ENCODE measurements at regions of chr3 and their contacts with region 1.

Region 1: GRCh38 chr3:136932978-136933772 is 24.6 kb upstream of the IL20RB start:
- DNase-seq: no peak
- ATAC-seq: no peak
- H3K4me3 ChIP-seq: no peak overlapping the region
- H3K27ac ChIP-seq: no peak overlapping the region
- H3K4me1 ChIP-seq: 0 out of 2 replicates have a peak, but pooled peaks cover 2% of the 10 kb centered on the region
- H3K27me3 ChIP-seq: no peaks in the 10 kb centered on the region
- CTCF ChIP-seq: no peak
- POLR2A ChIP-seq: no peak
- RAD21 ChIP-seq: no peak

Region 2: DNA sequence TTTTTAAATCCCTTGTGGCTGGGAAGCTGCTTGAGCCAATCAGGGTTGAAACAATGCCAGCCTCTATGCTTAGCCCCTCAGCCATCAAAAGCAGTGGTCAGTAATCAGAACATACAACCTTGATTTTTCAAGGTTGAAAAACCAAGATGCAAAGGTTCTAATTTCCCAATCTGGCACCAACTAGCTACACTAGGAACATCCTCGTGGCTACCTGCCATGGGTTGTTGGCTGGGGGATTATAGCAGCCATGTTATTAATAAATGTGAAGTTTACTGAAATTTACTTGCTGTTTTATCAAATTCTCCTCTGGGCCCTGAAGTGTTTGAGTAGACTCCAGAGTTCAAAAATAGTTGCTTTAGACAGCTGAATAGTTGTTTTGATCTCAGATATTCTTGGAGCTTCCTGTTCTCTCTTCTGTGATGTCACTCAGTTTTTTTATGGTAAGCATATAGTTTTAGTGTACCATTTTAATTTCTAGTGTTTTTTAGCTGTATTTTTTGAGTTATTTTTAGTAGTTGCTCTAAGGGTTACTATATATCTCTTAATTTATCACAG is 651.1 kb before region 1 on chr3:
- CTCF ChIA-PET with region 1: no interaction called
- POLR2A ChIA-PET with region 1: no interaction called
- dilution Hi-C with region 1: no loop called
- in situ Hi-C with region 1: no loop called
- intact Hi-C with region 1: no loop called
- DNase-seq: no peak
- ATAC-seq: no peak
- H3K4me3 ChIP-seq: no peak overlapping the region
- H3K27ac ChIP-seq: no peak overlapping the region
- H3K4me1 ChIP-seq: peaks cover 9% of the 10 kb centered on the region
- H3K27me3 ChIP-seq: no peaks in the 10 kb centered on the region
- CTCF ChIP-seq: no peak
- POLR2A ChIP-seq: no peak
- RAD21 ChIP-seq: no peak

Region 3: DNA sequence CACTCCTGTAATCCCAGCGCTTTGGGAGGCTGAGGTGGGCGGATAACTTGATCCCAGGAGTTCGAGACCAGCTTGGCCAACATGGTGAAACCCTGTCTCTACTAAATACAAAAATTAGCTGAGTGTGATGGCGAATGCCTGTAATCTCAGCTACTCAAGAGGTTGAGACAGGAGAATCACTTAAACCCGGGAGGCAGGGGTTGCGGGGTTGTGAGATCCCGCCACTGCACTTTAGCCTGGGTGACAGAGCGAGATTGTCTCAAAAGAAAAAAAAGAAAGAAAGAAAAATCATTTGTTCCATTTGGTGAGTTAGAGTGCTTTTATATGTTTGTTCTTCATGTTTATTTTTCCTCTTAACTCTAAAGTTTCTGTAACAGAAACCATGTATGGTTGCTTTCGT is 63.9 kb before region 1 on chr3:
- CTCF ChIA-PET with region 1: interaction called, 11 read pairs
- POLR2A ChIA-PET with region 1: no interaction called
- dilution Hi-C with region 1: no loop called
- in situ Hi-C with region 1: no loop called
- intact Hi-C with region 1: no loop called
- DNase-seq: no peak
- ATAC-seq: no peak
- H3K4me3 ChIP-seq: no peak overlapping the region
- H3K27ac ChIP-seq: no peak overlapping the region
- H3K4me1 ChIP-seq: no peaks in the 10 kb centered on the region
- H3K27me3 ChIP-seq: no peaks in the 10 kb centered on the region
- CTCF ChIP-seq: no peak
- POLR2A ChIP-seq: no peak
- RAD21 ChIP-seq: no peak

Region 4: DNA sequence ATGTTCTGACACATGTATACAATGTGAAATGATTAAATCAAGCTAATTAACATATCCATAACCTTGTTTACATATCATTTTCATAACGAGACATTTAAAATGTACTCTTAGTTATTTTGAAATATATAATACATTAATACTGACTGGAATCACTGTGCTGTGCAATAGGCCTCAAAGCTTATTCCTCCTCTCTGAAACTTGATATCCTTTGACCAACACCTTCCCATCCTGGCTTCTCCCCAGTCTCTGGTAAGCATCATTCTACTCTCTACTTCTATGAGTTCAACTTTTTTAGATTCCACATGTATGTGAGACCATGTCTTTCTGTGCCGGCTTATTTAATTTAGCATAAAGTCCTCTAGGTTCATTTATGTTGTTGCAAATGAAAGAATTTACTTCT is 22.5 kb before region 1 on chr3:
- CTCF ChIA-PET with region 1: interaction called, 6 read pairs
- POLR2A ChIA-PET with region 1: interaction called, 13 read pairs
- dilution Hi-C with region 1: no loop called
- in situ Hi-C with region 1: no loop called
- intact Hi-C with region 1: no loop called
- DNase-seq: no peak
- ATAC-seq: no peak
- H3K4me3 ChIP-seq: no peak overlapping the region
- H3K27ac ChIP-seq: no peak overlapping the region
- H3K4me1 ChIP-seq: no peaks in the 10 kb centered on the region
- H3K27me3 ChIP-seq: no peaks in the 10 kb centered on the region
- CTCF ChIP-seq: no peak
- POLR2A ChIP-seq: no peak
- RAD21 ChIP-seq: no peak

Measured in IMR-90 (cell line).